ENCODE measurements at regions of chr5 and their contacts with region 1.

Region 1: GRCh38 chr5:63262185-63262981 is 683.8 kb downstream of the LRRC70 start:
- DNase-seq: no peak
- H3K4me3 Mint-ChIP-seq: peak overlapping the region; percentile 14
- H3K27ac Mint-ChIP-seq: peak overlapping the region; percentile 97
- H3K4me1 Mint-ChIP-seq: peaks cover 41% of the 10 kb centered on the region
- H3K27me3 Mint-ChIP-seq: no peaks in the 10 kb centered on the region
- CTCF ChIP-seq: no peak

Region 2: DNA sequence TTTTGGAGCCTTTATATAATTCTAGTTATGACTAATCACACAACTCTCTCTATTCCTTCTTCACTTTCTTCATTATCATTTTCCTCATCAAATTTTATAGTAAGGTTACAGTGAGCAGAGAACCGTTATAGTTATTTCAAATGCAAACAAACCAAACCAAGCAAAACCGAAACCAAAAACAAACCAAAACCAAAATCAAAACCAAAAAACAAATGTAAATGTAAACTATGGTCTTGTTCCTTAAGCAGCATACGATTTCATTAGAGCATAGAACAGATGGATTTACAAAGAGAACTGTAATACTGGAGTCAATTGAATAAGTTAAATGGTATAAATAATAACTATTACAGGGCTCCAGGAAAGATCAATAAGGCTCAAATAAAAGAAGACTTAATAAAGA is 236.7 kb before region 1 on chr5:
- CTCF ChIA-PET with region 1: no interaction called
- intact Hi-C with region 1: no loop called
- DNase-seq: no peak
- H3K4me3 Mint-ChIP-seq: no peak overlapping the region
- H3K27ac Mint-ChIP-seq: no peak overlapping the region
- H3K4me1 Mint-ChIP-seq: no peaks in the 10 kb centered on the region
- H3K27me3 Mint-ChIP-seq: no peaks in the 10 kb centered on the region
- CTCF ChIP-seq: no peak

Region 3: GRCh38 chr5:63053019-63053638 is 209.3 kb before region 1 on chr5:
- CTCF ChIA-PET with region 1: no interaction called
- intact Hi-C with region 1: loop called (anchors 10 kb)
- DNase-seq: peak; percentile 52
- H3K4me3 Mint-ChIP-seq: no peak overlapping the region
- H3K27ac Mint-ChIP-seq: no peak overlapping the region
- H3K4me1 Mint-ChIP-seq: peaks cover 52% of the 10 kb centered on the region
- H3K27me3 Mint-ChIP-seq: no peaks in the 10 kb centered on the region
- CTCF ChIP-seq: no peak